Breast epithelium (tissue), 4 donors: ENCODE measurements at regions of chr7 and their contacts with region 1.

Region 1: DNA sequence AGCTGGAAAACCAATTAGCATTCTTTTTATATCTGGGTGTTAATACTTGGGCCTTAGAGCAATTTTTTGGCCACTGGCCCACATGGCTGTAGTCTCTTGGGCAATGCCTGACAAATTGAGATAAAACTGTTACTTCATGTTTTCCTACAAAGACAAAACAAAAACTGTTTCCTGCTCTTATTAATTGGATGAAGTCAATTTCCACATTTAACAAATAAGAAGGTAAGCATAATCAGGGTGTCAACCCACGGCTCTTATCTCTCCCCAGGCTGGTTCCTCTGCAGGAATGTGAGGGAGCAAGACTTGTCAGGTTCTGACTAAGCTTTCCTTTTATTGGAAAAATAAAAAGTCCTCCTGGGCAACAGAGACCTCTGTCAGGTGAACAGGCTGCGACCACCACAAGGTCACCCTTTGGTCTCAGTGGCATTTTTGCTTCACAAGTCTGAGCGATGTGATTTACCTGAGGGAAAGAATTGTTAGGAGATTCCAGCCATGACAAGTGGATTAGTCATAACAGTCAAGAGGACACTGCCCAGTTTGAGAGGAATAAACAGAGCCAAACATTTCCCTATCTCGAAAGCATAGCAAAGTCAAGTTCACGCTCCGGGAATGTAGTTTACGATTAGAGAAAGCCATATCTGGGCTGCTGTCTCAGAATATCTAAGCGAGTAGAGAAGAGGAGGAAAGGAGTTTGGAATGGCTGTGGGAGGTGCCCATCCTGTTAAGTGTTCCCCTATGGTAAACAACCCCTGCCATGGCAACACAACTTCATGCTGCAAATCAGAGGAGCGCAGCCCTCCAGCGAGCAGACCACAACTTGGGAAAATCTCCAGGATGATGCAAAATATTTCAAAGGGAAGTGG is 144.4 kb downstream of the TES start:
- DNase-seq: peak in 1 of 2 donors; percentile 72
- H3K4me3 ChIP-seq: peak overlapping the region; percentile 7 to 43 (median 24)
- H3K27ac ChIP-seq: peak overlapping the region; percentile 85
- H3K4me1 ChIP-seq: peaks cover 4 to 17% of the 10 kb centered on the region in 2 donors
- H3K27me3 ChIP-seq: no peaks in the 10 kb centered on the region
- CTCF ChIP-seq: no peak
- POLR2A ChIP-seq: no peak

Region 2: GRCh38 chr7:116173051-116174028 is 181.4 kb before region 1 on chr7:
- intact Hi-C with region 1: no loop called
- DNase-seq: no peak
- H3K4me3 ChIP-seq: no peak overlapping the region
- H3K27ac ChIP-seq: no peak overlapping the region
- H3K4me1 ChIP-seq: no peaks in the 10 kb centered on the region
- H3K27me3 ChIP-seq: no peaks in the 10 kb centered on the region
- CTCF ChIP-seq: peak; percentile 45 to 70 (median 66)
- POLR2A ChIP-seq: no peak

Region 3: GRCh38 chr7:116525913-116526861 is 171.4 kb after region 1 on chr7:
- intact Hi-C with region 1: loop called (anchors 5 kb)
- DNase-seq: peak; percentile 63 to 68
- H3K4me3 ChIP-seq: peak overlapping the region; percentile 66 to 82 (median 77)
- H3K27ac ChIP-seq: peak overlapping the region; percentile 87 to 92
- H3K4me1 ChIP-seq: no peaks in the 10 kb centered on the region
- H3K27me3 ChIP-seq: no peaks in the 10 kb centered on the region
- CTCF ChIP-seq: peak in 1 of 3 donors; percentile 88
- POLR2A ChIP-seq: no peak